AG04449 (cell line): ENCODE measurements at regions of chr4 and their contacts with region 1.

Region 1: DNA sequence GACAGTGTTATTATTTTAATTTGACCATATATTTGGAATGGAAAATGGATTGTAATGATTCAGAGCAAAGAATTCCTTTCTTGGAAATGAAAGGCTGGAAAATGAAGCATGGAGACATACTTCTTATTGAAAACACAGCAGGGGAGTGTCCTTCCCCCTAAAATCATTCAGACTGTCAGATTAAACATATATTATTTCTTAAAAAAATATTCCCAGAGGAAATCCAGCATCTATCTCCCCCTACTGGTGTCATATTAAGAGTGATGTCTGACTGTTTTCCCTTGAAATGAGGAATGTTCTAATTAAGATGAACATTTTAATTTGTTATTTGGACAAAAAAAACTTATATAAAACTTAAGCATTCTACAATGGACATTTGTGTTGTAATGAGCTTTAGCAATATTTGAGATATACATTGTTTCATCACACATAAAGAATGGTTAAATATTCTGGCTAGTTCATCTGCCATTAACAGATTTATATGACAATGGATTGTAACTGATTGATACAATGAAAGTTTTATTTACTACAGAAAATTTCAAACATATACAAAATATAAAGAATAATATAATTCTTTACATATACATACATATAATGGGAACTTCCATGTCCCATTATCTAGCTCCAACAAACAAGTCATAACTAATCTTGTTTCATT is 264.6 kb downstream of the SPRY1 start:
- DNase-seq: no peak
- H3K4me3 ChIP-seq: no peak overlapping the region
- CTCF ChIP-seq: peak; percentile 27

Region 2: GRCh38 chr4:123102897-123103471 is 558.2 kb before region 1 on chr4:
- CTCF ChIA-PET with region 1: interaction called, 22 read pairs
- POLR2A ChIA-PET with region 1: no interaction called
- DNase-seq: peak; percentile 26
- H3K4me3 ChIP-seq: no peak overlapping the region
- CTCF ChIP-seq: peak; percentile 48

Region 3: GRCh38 chr4:123390846-123391456 is 270.3 kb before region 1 on chr4:
- CTCF ChIA-PET with region 1: interaction called, 26 read pairs
- POLR2A ChIA-PET with region 1: no interaction called
- DNase-seq: no peak
- H3K4me3 ChIP-seq: no peak overlapping the region
- CTCF ChIP-seq: peak; percentile 11

Region 4: DNA sequence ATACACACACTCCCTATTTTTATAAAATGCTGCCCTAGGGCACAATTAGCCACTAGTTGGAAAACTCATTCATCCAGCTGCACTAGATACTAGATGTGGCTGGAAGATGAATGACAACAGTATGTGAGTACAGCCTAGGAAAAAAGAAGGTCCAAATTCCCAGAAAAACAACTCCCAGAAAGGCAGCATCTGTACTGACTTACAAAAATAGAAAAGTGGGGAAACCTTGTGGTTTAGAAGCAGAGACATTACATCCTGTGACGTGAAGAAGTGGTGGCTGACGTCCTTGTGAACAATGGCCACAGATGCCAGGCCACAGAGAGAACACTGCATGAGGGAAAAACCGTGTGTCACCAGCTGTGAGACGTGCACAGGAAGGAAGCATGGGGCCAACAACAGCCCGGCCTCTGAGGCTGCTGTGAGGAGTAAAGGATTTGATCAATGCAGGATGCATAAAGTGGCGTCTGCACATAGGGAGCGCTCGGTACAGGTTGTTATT is 183.4 kb before region 1 on chr4:
- CTCF ChIA-PET with region 1: no interaction called
- POLR2A ChIA-PET with region 1: no interaction called
- DNase-seq: peak; percentile 19
- H3K4me3 ChIP-seq: no peak overlapping the region
- CTCF ChIP-seq: no peak

Region 5: DNA sequence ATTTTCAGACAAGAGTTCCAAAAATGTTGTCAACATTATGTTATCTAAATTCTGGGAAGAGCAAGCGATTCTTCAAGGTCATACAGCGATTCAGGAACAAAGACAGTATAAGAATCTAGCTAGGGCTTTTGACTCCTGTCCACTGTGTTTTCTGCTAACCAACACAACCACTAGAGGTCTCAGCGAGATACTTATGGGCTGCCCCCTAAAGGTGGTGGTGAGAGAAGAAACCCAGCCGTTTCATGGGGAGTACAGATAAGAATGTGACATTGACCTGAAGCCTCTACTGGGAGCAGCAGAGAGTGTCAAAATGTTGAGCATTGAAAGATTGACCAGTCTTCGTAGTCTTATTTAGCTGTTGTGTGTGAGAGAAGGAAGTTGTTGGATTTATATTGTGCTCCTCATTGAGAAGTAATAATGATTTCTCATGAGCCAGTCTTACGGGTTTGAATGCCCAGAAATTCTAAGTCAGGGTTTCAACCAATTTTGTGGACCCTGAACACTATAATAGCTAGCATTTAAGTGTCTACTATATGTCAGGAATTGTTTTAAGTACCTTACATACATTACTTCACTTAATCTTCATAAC is 96.4 kb before region 1 on chr4:
- CTCF ChIA-PET with region 1: interaction called, 10 read pairs
- POLR2A ChIA-PET with region 1: no interaction called
- DNase-seq: no peak
- H3K4me3 ChIP-seq: no peak overlapping the region
- CTCF ChIP-seq: peak; percentile 84

Region 6: GRCh38 chr4:123671633-123672404 is 10.6 kb after region 1 on chr4:
- CTCF ChIA-PET with region 1: interaction called, 39 read pairs
- POLR2A ChIA-PET with region 1: no interaction called
- DNase-seq: no peak
- H3K4me3 ChIP-seq: no peak overlapping the region
- CTCF ChIP-seq: no peak